Gastrocnemius medialis (tissue), 4 donors: ENCODE measurements at regions of chr9 and their contacts with region 1.

Region 1: DNA sequence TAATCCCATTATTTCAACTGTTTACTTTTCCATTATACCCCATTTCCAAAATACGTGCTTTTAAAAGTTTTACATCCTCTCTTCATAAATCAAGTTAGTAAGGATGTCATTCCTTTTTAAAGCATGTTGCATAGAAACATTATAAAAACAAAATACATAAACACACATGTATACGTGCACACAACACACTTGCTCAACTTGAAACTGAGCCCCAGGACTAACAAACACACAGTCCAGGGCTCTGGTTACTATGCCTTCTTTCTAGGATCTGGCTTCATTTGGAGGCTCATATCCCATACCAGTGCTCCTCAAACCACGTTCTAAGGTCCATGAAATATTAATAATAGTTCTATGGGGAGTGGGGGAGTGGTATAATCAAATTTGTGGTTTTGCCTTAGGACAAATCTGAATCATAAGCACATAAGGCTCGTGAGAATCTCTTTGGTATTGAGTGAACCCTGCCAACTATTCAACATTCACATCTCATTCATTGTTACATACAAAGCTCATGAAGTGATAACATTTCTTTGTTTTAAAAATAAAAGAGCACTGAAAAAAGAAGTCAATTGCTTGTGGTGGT is 55.2 kb downstream of the NFIB start:
- DNase-seq: no peak
- ATAC-seq: no peak
- H3K4me3 ChIP-seq: no peak overlapping the region
- H3K27ac ChIP-seq: peak overlapping the region; percentile 8 to 87 (median 62)
- H3K4me1 ChIP-seq: peaks cover 42 to 48% of the 10 kb centered on the region in 2 donors
- H3K27me3 ChIP-seq: no peaks in the 10 kb centered on the region
- CTCF ChIP-seq: no peak
- POLR2A ChIP-seq: no peak

Region 2: DNA sequence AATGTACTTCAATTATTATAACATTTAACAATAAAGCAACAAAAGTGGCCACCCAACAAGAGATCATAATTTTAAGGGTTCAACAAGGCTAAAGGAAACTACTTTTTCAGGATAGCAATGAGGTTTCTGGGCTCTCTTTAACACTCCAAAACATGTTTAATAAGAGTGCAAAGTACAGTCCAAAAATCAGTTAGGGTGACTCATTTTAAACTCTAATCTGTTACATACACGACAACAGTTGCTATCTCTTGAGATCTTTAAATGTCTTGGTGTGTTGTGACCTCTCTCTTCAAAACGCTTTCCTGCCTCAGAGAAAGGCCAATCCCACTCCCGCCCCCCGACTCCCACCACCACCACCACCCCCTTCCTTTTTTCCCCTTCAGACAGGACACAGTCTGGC is 43.7 kb after region 1 on chr9:
- in situ Hi-C with region 1: loop called in 1 of 4 experiments (anchors 10 kb)
- intact Hi-C with region 1: loop called (anchors 5 kb)
- DNase-seq: no peak
- ATAC-seq: no peak
- H3K4me3 ChIP-seq: peak overlapping the region in 3 of 4 donors; percentile 16 to 26 (median 20)
- H3K27ac ChIP-seq: peak overlapping the region; percentile 60 to 99 (median 95)
- H3K4me1 ChIP-seq: peaks cover 88 to 91% of the 10 kb centered on the region in 2 donors
- H3K27me3 ChIP-seq: no peaks in the 10 kb centered on the region
- CTCF ChIP-seq: no peak
- POLR2A ChIP-seq: no peak